Tibial artery (tissue), 4 donors: ENCODE measurements at regions of chr6 and their contacts with region 1.

Region 1: DNA sequence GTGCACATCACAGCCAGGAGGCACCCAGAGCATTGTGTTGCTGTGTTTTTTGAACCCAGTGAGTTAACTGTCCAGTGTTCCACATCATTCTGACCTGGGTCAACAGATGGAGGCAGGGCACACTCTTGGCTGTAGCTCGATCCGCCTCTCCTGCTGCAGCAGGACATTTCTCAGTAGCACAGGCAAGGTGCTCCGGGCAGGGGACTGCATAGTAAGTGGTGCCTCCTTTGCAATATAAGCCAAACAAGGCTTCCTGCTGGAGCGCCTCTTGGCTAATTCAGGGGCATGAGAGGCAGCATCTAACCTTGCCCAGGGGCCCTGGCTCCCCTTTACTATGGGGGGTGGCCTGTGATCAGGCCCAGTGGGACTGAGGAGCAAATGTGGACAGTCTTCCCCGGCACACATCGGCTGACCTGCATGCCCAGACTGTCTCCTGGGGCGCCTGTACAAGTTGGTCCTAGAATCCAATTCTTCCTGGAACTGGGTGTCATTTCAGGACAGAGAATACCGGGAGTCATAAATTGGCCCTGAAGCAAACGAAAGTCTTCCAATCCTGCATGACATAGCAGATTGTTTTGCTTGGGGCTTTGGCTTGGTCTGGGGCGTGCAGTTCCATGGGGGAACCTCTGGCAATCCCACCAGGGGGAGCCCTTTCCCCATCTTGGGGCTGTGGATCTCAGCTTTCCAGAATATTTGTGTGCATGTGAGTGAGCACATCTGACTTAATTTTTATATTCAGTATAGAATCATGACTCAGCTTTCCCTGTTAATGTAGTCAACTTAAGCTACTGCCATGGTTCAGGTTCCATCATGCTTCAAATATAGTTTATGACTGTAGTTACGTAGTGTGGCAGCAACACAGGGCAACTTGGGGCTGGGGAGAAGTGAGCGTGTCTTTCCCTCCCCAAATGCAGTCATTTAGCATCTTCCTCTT is 56.0 kb upstream of the DDR1 start:
- DNase-seq: peak; percentile 90 to 96
- H3K4me3 ChIP-seq: peak overlapping the region; percentile 1 to 12
- H3K27ac ChIP-seq: peak overlapping the region; percentile 48 to 64
- H3K4me1 ChIP-seq: peaks cover 0 to 30% (median 19%) of the 10 kb centered on the region in 4 donors
- H3K27me3 ChIP-seq: no peaks in the 10 kb centered on the region
- CTCF ChIP-seq: peak; percentile 91 to 96

Region 2: GRCh38 chr6:30583921-30584320 is 244.4 kb before region 1 on chr6:
- intact Hi-C with region 1: no loop called
- DNase-seq: no peak
- H3K4me3 ChIP-seq: no peak overlapping the region
- H3K27ac ChIP-seq: no peak overlapping the region
- H3K4me1 ChIP-seq: no peaks in the 10 kb centered on the region
- H3K27me3 ChIP-seq: no peaks in the 10 kb centered on the region
- CTCF ChIP-seq: no peak

Region 3: GRCh38 chr6:30672445-30673253 is 155.6 kb before region 1 on chr6 and contains the start of gene DHX16:
- intact Hi-C with region 1: no loop called
- DNase-seq: peak; percentile 98
- H3K4me3 ChIP-seq: peak within 1 kb of the TSS; percentile 85
- H3K27ac ChIP-seq: peak within 1 kb of the TSS; percentile 67 to 77
- H3K4me1 ChIP-seq: peaks cover 0 to 18% (median 12%) of the 10 kb centered on the region in 4 donors
- H3K27me3 ChIP-seq: no peaks in the 10 kb centered on the region
- CTCF ChIP-seq: peak; percentile 81 to 85

Region 4: GRCh38 chr6:30883685-30884520 is 55.6 kb after region 1 on chr6 and contains the start of gene DDR1:
- intact Hi-C with region 1: loop called (anchors 5 kb)
- DNase-seq: peak; percentile 60 to 92
- H3K4me3 ChIP-seq: peak within 1 kb of the TSS; percentile 87 to 88
- H3K27ac ChIP-seq: peak within 1 kb of the TSS; percentile 93 to 98
- H3K4me1 ChIP-seq: peaks cover 0 to 69% (median 40%) of the 10 kb centered on the region in 4 donors
- H3K27me3 ChIP-seq: no peaks in the 10 kb centered on the region
- CTCF ChIP-seq: no peak

Region 5: GRCh38 chr6:30895341-30895740 is 67.0 kb after region 1 on chr6:
- intact Hi-C with region 1: no loop called
- DNase-seq: no peak
- H3K4me3 ChIP-seq: no peak overlapping the region
- H3K27ac ChIP-seq: no peak overlapping the region
- H3K4me1 ChIP-seq: peaks cover 0 to 4% (median 0%) of the 10 kb centered on the region in 4 donors
- H3K27me3 ChIP-seq: no peaks in the 10 kb centered on the region
- CTCF ChIP-seq: no peak

Region 6: GRCh38 chr6:32092760-32093497 is 1264.6 kb after region 1 on chr6:
- intact Hi-C with region 1: no loop called
- DNase-seq: peak; percentile 64 to 81
- H3K4me3 ChIP-seq: peak overlapping the region in 1 of 2 donors; percentile 19
- H3K27ac ChIP-seq: peak overlapping the region; percentile 85 to 87
- H3K4me1 ChIP-seq: peaks cover 0 to 67% (median 41%) of the 10 kb centered on the region in 4 donors
- H3K27me3 ChIP-seq: no peaks in the 10 kb centered on the region
- CTCF ChIP-seq: no peak